GM10248 (cell line): ENCODE measurements at regions of chr15 and their contacts with region 1.

Region 1: DNA sequence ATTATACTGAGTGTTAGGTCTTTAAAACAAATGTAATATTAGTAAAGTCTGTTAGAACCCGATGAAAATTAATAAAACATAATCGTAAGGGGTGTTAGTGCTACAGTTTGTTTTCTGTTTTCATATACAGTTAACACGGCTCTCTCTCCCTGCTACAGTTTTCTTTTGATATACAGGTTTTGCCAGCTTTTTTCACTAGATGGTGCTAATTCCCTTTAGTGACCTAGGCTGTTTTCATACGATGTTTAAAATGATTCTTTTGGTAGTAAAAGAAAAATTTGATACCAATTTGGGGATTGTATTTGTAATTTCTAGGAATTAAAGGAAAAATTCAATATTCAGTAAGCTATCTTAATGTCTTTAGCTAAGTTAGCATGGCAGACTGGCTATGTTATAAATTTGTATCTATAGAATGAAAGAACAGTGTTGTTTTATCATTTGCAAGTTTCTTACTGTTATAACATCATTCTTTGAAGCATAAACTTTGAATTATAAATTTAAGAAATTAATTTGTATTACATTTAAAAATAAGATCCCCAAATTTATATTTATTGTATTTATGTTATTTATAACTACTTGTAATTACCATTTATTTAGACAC is 11.5 kb downstream of the APH1B start:
- DNase-seq: peak; percentile 49
- CTCF ChIP-seq: peak; percentile 57

Region 2: DNA sequence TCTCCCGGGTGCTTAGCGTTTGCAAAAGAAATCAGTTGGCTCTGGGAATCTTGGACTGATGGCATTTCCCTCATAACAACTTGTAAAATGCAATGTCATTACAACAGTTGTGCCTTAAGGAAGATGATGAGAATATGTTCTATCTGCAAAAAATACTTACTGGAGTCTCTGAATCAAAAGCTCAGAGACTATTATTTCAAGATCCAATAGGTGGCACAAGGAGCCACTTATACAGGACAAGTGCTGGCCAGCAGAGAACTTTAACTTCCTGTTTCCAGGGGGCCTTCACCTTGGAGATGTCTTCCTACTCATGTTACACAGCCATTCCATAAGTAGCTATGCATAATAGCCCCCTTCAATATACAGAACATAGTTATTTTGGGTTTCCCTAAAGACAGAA is 122.7 kb before region 1 on chr15:
- CTCF ChIA-PET with region 1: no interaction called
- POLR2A ChIA-PET with region 1: no interaction called
- DNase-seq: no peak
- CTCF ChIP-seq: peak; percentile 31

Region 3: GRCh38 chr15:63306492-63307073 is 17.7 kb after region 1 on chr15:
- CTCF ChIA-PET with region 1: interaction called, 15 read pairs
- POLR2A ChIA-PET with region 1: interaction called, 3 read pairs
- DNase-seq: no peak
- CTCF ChIP-seq: no peak